Vagina (tissue), 2 donors: ENCODE measurements at regions of chr17 and their contacts with region 1.

Region 1: DNA sequence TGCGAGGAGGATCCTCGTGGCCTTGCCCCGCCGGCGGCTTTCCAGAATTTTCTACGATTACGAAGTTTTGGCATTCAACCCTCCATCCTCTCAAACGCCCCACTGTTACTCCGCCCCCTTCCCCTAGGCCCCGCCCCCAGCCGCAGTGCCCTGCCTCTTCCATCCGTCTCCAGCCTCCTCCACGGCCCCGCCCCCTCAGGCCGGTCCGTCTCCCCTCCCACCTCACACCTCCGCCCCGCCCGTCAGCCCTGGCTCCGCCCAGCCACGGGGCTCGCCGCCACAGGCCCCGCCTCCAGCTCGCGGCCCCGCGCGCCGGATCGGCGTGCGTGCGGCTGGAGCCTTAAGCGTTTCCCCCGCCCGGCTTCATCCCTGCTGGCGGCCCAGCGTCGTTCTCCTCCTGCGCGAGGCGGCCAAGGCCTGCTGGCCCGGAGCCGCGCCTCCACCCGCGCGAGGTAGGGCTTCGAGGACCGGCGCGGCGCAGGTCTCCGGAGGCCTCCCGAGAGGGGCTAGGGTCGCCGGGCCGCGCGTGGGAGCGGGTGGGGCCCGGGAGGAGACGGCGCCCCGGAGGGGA is at the starts of genes C17orf67 and DGKE:
- DNase-seq: peak in 1 of 2 donors; percentile 99
- H3K4me3 ChIP-seq: peak within 1 kb of the TSS; percentile 82 to 93
- H3K27ac ChIP-seq: peak within 1 kb of the TSS; percentile 97
- H3K4me1 ChIP-seq: peaks cover 57% of the 10 kb centered on the region
- H3K27me3 ChIP-seq: no peaks in the 10 kb centered on the region
- CTCF ChIP-seq: peak in 1 of 3 experiments; percentile 5
- POLR2A ChIP-seq: peak in 1 of 2 donors; percentile 76
- total RNA-seq, gene C17orf67: 2.7 TPM
- total RNA-seq, gene DGKE: 13.0 TPM

Region 2: GRCh38 chr17:56762988-56763387 is 70.9 kb before region 1 on chr17:
- intact Hi-C with region 1: no loop called
- DNase-seq: no peak
- H3K4me3 ChIP-seq: no peak overlapping the region
- H3K27ac ChIP-seq: no peak overlapping the region
- H3K4me1 ChIP-seq: no peaks in the 10 kb centered on the region
- H3K27me3 ChIP-seq: no peaks in the 10 kb centered on the region
- CTCF ChIP-seq: no peak
- POLR2A ChIP-seq: no peak

Region 3: DNA sequence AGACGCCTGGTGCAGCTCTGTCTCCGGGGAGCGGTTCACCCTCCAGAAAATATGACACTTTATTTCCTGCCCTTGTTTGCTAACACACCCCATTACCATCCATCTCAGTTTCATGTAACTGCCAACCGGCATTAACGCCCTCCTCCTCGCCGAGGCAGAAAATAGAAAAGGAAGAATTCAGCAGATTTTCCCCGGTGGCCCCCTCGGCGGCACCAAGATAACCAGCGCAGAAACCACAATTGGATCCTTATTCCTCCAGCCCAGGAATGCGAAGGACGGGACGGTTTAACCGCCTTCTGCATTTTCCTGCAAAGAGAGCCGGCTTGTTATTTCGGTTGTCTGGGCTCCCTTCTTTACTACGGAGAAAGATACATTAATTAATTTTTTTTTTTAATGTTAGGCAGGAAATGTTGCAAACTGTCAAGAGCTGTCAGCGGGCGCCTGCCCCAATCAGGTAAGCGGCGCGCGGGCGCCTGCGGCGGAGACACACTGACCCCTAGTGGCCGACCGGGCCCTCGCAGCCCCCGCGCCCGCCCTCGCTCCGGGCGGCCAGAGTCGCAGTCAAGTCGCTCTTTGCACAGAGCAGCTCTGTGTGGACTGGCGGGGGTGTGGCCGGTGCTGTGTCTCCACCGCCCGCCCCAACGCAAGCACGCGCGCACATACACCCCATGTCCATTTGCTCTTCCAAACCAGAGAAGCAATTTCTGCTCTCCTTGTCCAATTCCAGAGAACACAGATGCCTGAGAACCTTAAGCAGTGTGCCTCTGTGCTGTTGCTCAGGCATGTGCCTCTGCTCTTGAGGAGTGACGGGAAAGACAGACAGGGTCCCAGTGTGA is 53.8 kb before region 1 on chr17:
- intact Hi-C with region 1: no loop called
- DNase-seq: no peak
- H3K4me3 ChIP-seq: peak overlapping the region; percentile 11 to 28
- H3K27ac ChIP-seq: no peak overlapping the region
- H3K4me1 ChIP-seq: peaks cover 15% of the 10 kb centered on the region
- H3K27me3 ChIP-seq: no peaks in the 10 kb centered on the region
- CTCF ChIP-seq: peak; percentile 68 to 97 (median 89)
- POLR2A ChIP-seq: no peak

Region 4: DNA sequence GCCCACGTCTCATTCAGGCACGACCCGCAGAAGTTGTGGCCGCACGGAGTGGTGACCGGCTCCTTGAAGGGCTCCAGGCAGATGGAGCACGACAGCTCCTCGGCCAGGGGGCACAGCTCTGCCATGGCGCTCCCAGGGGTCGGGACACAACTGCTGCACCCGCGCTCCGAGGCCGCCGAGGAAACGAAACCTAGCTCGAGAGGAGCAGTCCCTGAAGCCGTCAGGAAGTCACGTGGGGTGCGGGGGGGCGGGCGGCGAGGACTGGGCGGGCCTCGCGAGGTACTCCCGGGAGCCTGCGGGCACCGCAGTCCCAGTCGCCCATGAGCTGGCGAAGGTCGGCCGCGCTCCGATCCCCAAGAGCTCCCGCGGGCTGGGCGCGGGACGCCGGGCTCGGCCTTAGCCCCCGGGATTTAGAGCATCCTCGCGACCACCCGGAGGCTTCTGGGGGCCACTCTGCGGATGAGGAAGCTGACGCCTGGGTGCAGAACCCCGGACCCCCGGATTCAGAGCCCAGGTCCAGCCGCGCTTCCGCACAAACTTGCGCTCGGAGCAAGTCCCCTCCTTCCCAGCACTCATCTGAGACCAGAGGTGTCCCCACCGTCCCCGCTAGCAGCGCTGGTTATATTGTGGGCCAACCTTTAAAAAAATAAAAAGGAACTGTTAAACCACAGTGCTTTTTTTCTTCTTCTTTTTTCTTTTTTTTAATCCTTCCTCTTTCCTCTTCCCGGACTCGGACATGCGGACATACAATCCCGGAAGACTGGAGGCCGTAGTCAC is 80.2 kb after region 1 on chr17 and contains the start of gene TRIM25:
- intact Hi-C with region 1: loop called (anchors 5 kb)
- DNase-seq: peak in 1 of 2 donors; percentile 97
- H3K4me3 ChIP-seq: peak within 1 kb of the TSS; percentile 78 to 83
- H3K27ac ChIP-seq: peak within 1 kb of the TSS; percentile 96
- H3K4me1 ChIP-seq: peaks cover 55% of the 10 kb centered on the region
- H3K27me3 ChIP-seq: no peaks in the 10 kb centered on the region
- CTCF ChIP-seq: peak in 2 of 3 experiments; percentile 10 to 25
- POLR2A ChIP-seq: peak; percentile 18 to 98
- total RNA-seq, gene TRIM25: 70.0 TPM